ENCODE measurements at regions of chr13 and their contacts with region 1.

Region 1: DNA sequence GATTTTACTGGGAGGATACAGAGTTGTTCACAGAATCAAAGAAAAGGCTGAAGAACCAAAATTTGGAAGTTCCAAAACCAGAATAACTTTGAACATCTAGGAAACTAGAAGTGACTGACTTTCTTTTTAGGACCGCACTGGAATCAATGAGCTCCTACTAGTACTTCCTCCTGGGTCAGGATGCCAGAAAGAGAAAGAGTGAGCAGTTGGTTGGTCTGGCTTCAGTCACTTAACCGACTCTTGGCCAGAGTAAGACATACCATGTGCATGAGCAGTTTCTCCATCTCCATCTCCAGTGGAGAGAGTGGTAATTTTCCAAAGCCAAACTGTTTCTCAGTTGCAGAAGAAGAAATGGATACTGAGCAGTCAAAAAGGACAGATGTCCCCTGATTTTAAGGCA is 27.1 kb upstream of the MTUS2 start:
- DNase-seq: no peak
- ATAC-seq: no peak
- H3K4me3 Mint-ChIP-seq: no peak overlapping the region
- H3K27ac Mint-ChIP-seq: no peak overlapping the region
- H3K4me1 Mint-ChIP-seq: no peaks in the 10 kb centered on the region
- H3K27me3 Mint-ChIP-seq: peaks cover 22% of the 10 kb centered on the region
- CTCF ChIP-seq: no peak

Region 2: DNA sequence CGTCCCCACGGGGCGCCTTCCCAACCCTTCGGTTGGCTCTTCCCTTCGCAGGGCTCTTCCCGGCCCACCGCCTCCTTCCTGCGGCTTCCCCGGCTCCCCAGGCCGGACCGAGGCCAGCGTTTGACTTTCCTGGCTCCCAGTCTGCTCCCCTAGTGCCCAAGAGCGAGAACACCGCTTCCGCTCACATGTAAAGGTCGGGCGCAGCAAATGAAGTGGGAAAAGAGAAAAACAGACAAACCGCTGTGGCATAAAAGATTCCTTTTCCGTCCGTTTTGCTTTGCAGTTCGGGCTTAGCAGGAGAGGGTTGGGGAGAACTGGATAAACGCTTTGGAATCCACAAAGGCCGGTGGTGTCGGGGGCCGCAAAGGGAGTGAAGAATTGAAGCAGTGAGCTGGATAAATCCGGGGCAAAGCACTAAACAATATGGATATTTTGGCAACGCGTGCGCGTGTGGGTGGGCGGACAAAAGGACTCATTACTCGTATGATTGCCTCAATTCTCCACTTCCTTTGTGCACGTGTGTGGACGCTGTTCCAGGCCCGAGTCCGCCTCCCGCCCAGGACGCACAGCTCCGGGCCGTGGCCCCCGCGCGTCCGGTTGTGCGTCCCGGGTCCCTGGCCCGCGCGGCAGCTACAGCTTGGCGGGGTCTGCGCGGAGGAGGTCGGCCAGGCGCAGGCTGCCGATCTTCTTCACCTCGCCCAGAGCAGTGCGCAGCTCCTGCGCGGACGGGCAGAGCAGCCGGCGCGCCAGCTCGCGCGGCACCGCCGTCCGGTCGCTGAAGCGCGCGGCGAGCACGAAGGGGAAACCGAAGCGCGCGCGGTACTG is 815.3 kb before region 1 on chr13:
- CTCF ChIA-PET with region 1: interaction called, 5 read pairs
- POLR2A ChIA-PET with region 1: no interaction called
- intact Hi-C with region 1: loop called (anchors 10 kb)
- DNase-seq: no peak
- ATAC-seq: no peak
- H3K4me3 Mint-ChIP-seq: no peak overlapping the region
- H3K27ac Mint-ChIP-seq: no peak overlapping the region
- H3K4me1 Mint-ChIP-seq: peaks cover 36% of the 10 kb centered on the region
- H3K27me3 Mint-ChIP-seq: peaks cover 79% of the 10 kb centered on the region
- CTCF ChIP-seq: no peak

Region 3: DNA sequence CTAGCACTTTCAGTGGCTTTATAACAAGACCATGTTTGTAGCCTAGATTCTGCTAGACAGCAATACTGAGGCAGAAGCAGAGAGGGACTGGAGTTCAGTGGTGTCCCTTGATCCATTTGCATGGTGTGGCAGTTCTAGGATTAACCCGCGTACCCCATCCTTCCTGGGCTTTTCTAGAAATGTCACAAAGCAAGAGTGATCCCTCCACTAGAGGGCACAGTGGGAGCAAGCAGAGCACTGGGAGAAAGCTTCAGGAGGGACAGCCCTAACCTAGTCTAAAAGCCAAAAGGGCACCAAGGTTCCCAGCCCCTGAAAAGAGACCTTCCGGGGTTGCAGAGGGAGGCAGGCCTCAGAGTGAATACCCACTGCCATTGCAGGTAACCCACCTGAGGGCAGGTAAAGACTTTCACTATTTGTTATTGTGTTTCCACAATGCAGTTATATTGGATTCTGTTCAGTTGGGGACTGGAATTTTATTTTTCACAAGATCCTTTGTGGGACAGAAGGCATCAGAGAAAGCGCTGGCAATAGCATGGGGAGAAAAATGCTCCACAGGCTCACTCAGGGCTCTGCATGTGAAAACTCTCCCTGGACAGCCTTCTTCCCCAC is 468.7 kb before region 1 on chr13:
- CTCF ChIA-PET with region 1: interaction called, 79 read pairs
- POLR2A ChIA-PET with region 1: no interaction called
- intact Hi-C with region 1: no loop called
- DNase-seq: peak; percentile 24
- ATAC-seq: peak; percentile 79
- H3K4me3 Mint-ChIP-seq: no peak overlapping the region
- H3K27ac Mint-ChIP-seq: no peak overlapping the region
- H3K4me1 Mint-ChIP-seq: peaks cover 5% of the 10 kb centered on the region
- H3K27me3 Mint-ChIP-seq: no peaks in the 10 kb centered on the region
- CTCF ChIP-seq: peak; percentile 50

Region 4: GRCh38 chr13:28478127-28478526 is 314.9 kb before region 1 on chr13:
- CTCF ChIA-PET with region 1: no interaction called
- POLR2A ChIA-PET with region 1: interaction called, 10 read pairs
- intact Hi-C with region 1: no loop called
- DNase-seq: no peak
- ATAC-seq: no peak
- H3K4me3 Mint-ChIP-seq: no peak overlapping the region
- H3K27ac Mint-ChIP-seq: no peak overlapping the region
- H3K4me1 Mint-ChIP-seq: no peaks in the 10 kb centered on the region
- H3K27me3 Mint-ChIP-seq: peaks cover 16% of the 10 kb centered on the region
- CTCF ChIP-seq: no peak

Region 5: DNA sequence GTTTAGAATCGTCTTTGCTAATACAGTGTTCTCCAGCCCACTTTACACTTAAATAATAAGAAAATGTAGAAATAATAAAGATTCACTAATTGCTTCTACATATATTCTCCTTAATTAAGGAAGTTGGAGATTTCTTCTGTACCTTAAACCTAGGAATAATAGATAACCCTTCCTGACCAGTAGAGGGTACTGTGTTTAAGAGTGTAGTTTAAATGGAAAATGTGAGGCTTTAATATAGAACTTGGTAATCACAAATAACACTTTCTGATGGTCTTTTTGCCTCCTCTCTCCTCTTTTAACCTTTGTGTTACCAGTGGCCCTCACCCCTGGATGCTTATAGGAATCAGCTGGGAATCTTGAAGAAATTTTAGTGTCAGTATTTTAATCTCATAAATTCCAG is 113.4 kb before region 1 on chr13:
- CTCF ChIA-PET with region 1: interaction called, 4 read pairs
- POLR2A ChIA-PET with region 1: no interaction called
- intact Hi-C with region 1: loop called (anchors 1 kb)
- DNase-seq: no peak
- ATAC-seq: no peak
- H3K4me3 Mint-ChIP-seq: no peak overlapping the region
- H3K27ac Mint-ChIP-seq: no peak overlapping the region
- H3K4me1 Mint-ChIP-seq: no peaks in the 10 kb centered on the region
- H3K27me3 Mint-ChIP-seq: no peaks in the 10 kb centered on the region
- CTCF ChIP-seq: no peak